Colonic mucosa (tissue), 4 donors: ENCODE measurements at regions of chr1 and their contacts with region 1.

Region 1: GRCh38 chr1:65431111-65431705 is 10.7 kb downstream of the LEPR start:
- DNase-seq: no peak
- H3K4me3 ChIP-seq: no peak overlapping the region
- H3K27ac ChIP-seq: no peak overlapping the region
- H3K4me1 ChIP-seq: no peaks in the 10 kb centered on the region
- H3K27me3 ChIP-seq: no peaks in the 10 kb centered on the region
- CTCF ChIP-seq: peak; percentile 41

Region 2: GRCh38 chr1:65235867-65236805 is 195.1 kb before region 1 on chr1:
- intact Hi-C with region 1: loop called (anchors 10 kb)
- DNase-seq: no peak
- H3K4me3 ChIP-seq: no peak overlapping the region
- H3K27ac ChIP-seq: no peak overlapping the region
- H3K4me1 ChIP-seq: no peaks in the 10 kb centered on the region
- H3K27me3 ChIP-seq: no peaks in the 10 kb centered on the region
- CTCF ChIP-seq: peak; percentile 33